Aorta (tissue), 5 donors: ENCODE measurements at regions of chr11 and their contacts with region 1.

Region 1: DNA sequence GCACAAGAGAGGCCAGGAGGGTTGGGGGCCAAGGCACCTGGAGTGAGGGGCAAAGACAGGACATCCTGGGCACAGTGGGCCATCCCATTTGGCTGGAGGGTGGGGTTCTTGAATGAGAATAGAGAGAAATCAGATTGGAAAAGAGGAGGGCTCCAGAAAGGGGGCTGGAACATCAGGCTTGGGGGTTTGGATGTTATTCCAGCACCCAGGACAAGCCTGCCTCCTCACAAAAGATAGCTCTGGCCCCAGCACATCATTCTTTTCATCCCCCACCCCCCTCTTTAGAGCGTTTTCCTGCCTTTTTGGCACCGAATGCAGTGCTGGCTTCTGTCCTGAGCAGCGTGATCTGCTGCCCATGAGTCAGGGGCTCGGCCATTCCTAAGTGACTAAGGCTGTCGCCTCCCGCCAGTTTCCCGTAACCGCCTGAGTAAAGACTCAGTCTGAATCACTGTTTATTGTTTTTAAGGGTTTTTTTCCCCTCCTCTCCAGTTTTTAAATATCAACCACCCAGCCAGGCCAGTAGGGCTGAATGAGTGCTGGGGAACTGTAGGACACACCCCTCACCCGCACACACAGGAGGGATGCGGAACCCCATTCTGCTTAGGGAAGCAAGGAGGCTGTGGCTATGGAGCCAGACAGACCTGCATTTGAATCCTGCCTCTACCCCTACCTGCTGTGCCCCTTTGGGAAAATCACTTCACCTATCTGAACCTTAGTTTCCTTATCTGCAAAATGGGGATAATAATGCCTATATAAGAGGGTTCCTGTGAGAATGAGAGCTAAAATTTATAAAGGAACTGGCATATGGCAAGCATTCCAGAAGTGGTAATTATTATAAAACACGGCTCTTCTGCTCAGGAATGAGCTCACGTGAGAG is 32.4 kb upstream of the NAV2 start:
- DNase-seq: peak; percentile 95 to 98
- ATAC-seq: peak; percentile 90
- H3K4me3 ChIP-seq: no peak overlapping the region
- H3K27ac ChIP-seq: peak overlapping the region; percentile 6 to 99
- H3K4me1 ChIP-seq: peaks cover 5 to 7% of the 10 kb centered on the region in 2 donors
- H3K27me3 ChIP-seq: no peaks in the 10 kb centered on the region

Region 2: DNA sequence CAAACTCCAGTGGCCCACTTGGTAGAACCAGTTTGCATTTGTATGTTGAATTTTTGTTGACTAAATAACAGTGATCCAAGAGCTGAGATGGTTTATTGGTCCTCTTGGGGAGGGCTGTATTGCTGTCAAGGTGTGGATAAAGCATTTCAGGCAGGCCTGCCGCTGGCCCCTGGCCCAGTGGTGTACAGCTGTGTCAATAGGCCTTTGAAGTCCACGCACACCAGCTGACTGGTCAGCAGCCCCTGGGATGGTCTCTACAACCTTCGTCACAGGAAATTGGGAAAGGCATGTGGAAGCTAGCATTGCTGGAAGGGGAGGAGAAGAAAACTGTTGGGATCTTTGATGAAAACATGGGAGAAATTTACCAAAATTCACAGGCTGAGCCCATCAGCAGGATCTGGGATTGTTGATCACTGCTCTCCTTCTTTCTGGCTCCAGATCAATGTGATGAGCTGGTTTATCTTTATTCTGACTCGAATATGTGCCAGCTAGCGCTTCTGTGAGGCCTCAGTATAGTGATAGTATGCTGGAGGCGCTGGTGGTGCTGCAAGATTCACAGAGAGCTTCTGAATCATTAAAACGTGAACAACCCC is 426.9 kb before region 1 on chr11:
- intact Hi-C with region 1: no loop called
- DNase-seq: no peak
- ATAC-seq: no peak
- H3K4me3 ChIP-seq: no peak overlapping the region
- H3K27ac ChIP-seq: no peak overlapping the region
- H3K4me1 ChIP-seq: no peaks in the 10 kb centered on the region
- H3K27me3 ChIP-seq: no peaks in the 10 kb centered on the region

Region 3: DNA sequence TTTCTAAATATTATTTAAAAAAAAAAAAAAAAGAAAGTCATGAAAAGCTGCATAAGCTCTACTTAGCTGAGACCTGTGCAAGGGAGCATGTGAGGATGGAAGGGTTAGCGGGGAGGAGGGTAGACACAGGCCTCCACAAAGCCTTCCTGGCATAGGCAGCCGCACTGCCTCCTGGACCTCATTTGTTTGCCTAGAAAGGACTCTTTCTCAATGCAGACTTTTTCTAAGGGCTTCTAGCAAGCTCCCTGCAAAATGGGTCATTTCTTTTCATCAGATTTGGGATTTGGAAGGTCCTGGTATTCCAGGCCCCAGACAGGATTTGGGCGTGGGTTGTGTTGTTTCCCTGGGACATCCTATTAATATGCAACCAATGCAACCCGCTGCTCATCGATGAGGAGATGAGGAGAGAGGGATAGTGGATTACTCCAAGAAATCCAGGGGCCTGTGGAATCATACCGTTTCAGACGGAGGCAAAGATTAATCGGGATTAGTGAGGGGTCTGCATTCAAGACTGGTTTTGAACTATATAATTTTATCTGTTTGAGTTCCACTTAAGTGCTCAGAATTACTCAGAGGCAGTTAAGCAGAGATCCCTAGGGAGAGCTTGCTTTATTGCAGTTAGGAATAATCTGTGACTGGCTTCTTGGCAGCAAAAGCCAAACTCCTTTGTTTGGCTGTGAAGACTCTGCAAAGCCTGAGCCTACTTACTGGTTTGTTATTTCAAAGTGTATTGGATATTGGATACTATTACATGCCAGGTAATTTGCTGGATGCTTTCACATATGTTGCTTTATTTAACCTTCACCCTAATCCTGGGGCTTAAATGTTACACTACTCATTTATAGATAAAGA is 74.4 kb before region 1 on chr11:
- intact Hi-C with region 1: no loop called
- DNase-seq: no peak
- ATAC-seq: peak; percentile 79
- H3K4me3 ChIP-seq: no peak overlapping the region
- H3K27ac ChIP-seq: peak overlapping the region in 1 of 2 donors; percentile 55
- H3K4me1 ChIP-seq: peaks cover 4 to 11% of the 10 kb centered on the region in 2 donors
- H3K27me3 ChIP-seq: no peaks in the 10 kb centered on the region

Region 4: GRCh38 chr11:19712281-19713220 is 32.4 kb after region 1 on chr11 and contains the start of gene NAV2:
- intact Hi-C with region 1: loop called in 1 of 2 experiments (anchors 5 kb)
- DNase-seq: peak; percentile 96
- ATAC-seq: peak; percentile 95
- H3K4me3 ChIP-seq: peak within 1 kb of the TSS; percentile 73 to 82
- H3K27ac ChIP-seq: peak within 1 kb of the TSS; percentile 73 to 96
- H3K4me1 ChIP-seq: peaks cover 0 to 4% of the 10 kb centered on the region in 2 donors
- H3K27me3 ChIP-seq: no peaks in the 10 kb centered on the region
- total RNA-seq, gene NAV2: 84.6 to 250 TPM